Psoas muscle (tissue), 8 donors: ENCODE measurements at regions of chr17 and their contacts with region 1.

Region 1: GRCh38 chr17:79082311-79083190 is 7.9 kb downstream of the ENGASE start:
- DNase-seq: peak; percentile 35 to 76
- ATAC-seq: peak in 3 of 4 donors; percentile 56 to 65 (median 57)
- H3K4me3 ChIP-seq: no peak overlapping the region
- H3K27ac ChIP-seq: no peak overlapping the region
- H3K4me1 ChIP-seq: peaks cover 21% of the 10 kb centered on the region
- H3K27me3 ChIP-seq: no peaks in the 10 kb centered on the region
- CTCF ChIP-seq: peak; percentile 74

Region 2: DNA sequence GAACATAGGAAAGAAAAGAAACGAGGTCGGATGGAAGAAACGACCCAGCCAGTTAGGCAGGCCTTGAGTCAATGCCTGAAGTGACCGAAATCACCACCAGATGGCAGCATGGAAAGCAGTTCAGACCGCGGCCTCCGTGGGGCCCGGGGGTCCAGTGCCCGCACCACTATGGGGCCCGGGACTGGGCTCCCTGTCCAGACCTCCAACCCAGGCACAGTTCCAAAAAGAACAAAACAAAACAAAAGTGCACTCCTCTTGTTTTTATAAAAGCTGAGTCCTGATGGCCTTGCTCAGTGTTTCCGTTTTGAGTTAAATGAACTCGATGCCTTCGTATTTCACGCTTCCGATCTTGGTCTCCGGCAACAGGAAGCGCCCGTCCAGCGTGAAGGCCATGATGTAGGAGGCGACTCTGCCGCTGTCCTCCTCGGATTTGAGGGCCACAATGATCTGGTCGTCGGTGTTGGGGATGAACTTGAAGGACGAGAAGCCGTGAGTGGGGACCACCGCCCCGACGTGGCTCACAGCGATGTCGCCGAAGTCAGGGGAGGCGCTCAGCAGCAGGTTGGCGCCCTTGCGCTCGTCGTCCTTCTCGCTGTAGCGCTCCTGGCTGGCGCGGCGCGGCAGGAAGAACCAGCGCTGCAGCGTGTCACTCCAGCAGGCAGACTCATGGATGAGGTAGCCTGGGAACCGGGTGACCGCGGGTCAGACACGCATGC is 89.2 kb before region 1 on chr17:
- intact Hi-C with region 1: no loop called
- DNase-seq: no peak
- ATAC-seq: peak; percentile 39 to 67 (median 52)
- H3K4me3 ChIP-seq: no peak overlapping the region
- H3K27ac ChIP-seq: no peak overlapping the region
- H3K4me1 ChIP-seq: peaks cover 15% of the 10 kb centered on the region
- H3K27me3 ChIP-seq: no peaks in the 10 kb centered on the region
- CTCF ChIP-seq: peak; percentile 71

Region 3: DNA sequence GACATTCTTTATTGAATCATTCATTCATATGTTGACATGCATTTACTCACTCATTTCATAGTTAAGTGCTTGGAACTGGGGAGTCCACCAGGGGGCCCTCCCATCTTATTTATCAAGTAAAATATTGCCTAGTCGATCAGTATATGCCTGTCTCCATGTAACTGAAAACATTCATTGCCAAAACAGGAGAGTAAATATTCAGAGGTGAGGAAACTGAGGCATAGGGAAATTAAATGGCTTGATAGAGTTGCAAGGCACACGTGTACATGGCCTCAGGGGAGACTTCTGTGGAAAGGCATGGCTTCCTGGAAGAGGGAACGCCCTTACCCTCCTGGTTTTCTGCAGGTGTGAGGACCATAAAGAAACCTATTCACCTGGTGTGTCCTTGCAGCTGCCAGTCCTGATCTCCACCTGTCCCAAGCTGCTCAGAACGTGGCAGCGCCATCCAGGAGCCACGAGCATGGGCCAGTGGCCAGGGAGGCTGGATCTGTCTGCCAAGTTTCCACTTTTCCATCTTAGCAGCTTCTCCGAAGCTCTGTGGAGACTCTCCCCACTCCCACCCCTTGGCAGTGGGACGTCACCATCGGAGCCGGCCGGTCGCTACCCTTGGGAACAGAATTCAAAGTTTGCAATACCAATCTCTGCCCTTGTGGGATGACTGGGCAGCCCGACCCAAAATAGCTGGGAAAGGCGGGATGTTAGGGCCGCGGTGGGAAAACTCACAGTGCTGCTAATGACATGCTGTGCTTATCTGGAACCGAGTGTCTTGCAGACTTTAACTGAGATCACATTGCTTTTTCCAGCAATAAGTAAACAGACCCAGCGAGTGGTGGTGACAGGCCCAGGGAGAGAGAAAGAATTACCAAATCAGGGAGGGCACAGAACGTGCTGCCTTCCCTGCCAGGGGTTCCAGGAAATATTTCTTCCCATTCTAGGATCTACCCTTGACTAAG is 62.6 kb before region 1 on chr17:
- intact Hi-C with region 1: loop called in 1 of 2 experiments (anchors 2 kb)
- DNase-seq: peak; percentile 72
- ATAC-seq: peak; percentile 47 to 76 (median 56)
- H3K4me3 ChIP-seq: no peak overlapping the region
- H3K27ac ChIP-seq: no peak overlapping the region
- H3K4me1 ChIP-seq: peaks cover 16% of the 10 kb centered on the region
- H3K27me3 ChIP-seq: peaks cover 0 to 10% (median 0%) of the 10 kb centered on the region in 3 donors
- CTCF ChIP-seq: peak; percentile 64

Region 4: DNA sequence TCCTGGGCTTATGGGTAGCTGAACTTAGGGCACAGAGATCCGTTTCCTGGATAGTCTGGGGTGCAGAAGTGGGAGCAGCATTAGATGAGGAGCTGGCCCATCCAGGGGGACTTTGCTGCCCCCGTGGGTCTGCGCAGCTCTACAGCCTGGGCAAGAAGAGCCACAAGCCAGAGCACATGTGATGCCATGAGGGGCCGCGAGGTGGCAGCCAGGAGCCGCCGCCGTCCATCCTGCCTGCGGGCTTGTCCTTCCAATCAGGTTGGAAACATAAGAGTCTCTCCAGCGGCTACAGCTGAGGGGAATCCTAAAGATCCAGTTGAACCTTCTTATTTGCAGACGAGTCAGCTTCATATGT is 36.7 kb before region 1 on chr17:
- intact Hi-C with region 1: loop called in 1 of 2 experiments (anchors 5 kb)
- DNase-seq: peak; percentile 76 to 87
- ATAC-seq: peak; percentile 79 to 91 (median 84)
- H3K4me3 ChIP-seq: no peak overlapping the region
- H3K27ac ChIP-seq: no peak overlapping the region
- H3K4me1 ChIP-seq: peaks cover 5% of the 10 kb centered on the region
- H3K27me3 ChIP-seq: peaks cover 0 to 22% (median 5%) of the 10 kb centered on the region in 3 donors
- CTCF ChIP-seq: peak; percentile 96

Region 5: GRCh38 chr17:79065105-79065670 is 17.4 kb before region 1 on chr17:
- intact Hi-C with region 1: loop called (anchors 1 to 2 kb)
- DNase-seq: no peak
- ATAC-seq: peak; percentile 60 to 86 (median 74)
- H3K4me3 ChIP-seq: no peak overlapping the region
- H3K27ac ChIP-seq: no peak overlapping the region
- H3K4me1 ChIP-seq: no peaks in the 10 kb centered on the region
- H3K27me3 ChIP-seq: no peaks in the 10 kb centered on the region
- CTCF ChIP-seq: peak; percentile 73

Region 6: GRCh38 chr17:79223953-79224352 is 141.4 kb after region 1 on chr17:
- intact Hi-C with region 1: no loop called
- DNase-seq: no peak
- ATAC-seq: no peak
- H3K4me3 ChIP-seq: no peak overlapping the region
- H3K27ac ChIP-seq: no peak overlapping the region
- H3K4me1 ChIP-seq: no peaks in the 10 kb centered on the region
- H3K27me3 ChIP-seq: peaks cover 4 to 89% (median 28%) of the 10 kb centered on the region in 3 donors
- CTCF ChIP-seq: no peak

Region 7: DNA sequence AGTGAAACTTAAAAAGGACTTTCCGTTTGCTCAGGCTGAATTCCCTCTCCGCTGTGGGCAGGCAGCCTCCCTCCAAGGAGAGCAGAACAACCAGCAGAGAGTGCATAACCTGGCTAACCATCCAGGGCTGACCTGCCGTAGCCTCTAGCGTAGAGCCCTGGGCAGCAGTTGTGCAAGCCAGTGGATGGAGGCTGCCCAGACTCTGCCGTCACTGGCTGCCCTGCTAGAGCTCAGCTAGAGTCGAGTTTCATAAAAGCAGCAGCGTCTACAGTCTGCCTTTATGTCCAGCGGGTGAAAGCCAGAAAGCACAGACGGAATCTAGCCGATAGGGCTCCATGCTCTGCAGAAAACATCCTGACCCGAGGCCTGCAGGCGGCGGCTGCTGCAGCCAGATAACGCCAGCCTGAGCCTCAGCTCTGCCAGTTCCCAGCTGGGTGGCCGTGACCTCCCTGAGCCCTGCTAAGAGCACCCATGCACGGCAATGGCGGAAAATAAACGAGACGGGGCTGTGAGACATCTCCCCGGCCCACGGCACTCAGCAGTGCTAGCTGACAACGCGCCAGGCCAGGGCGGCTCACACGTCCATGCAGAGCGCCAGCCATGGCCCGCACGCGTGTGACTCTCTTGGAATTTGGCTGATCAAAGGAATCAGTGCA is 223.3 kb after region 1 on chr17:
- intact Hi-C with region 1: loop called in 1 of 2 experiments (anchors 5 kb)
- DNase-seq: peak; percentile 66 to 88
- ATAC-seq: peak; percentile 91 to 94 (median 93)
- H3K4me3 ChIP-seq: peak overlapping the region; percentile 31
- H3K27ac ChIP-seq: peak overlapping the region; percentile 86
- H3K4me1 ChIP-seq: peaks cover 33% of the 10 kb centered on the region
- H3K27me3 ChIP-seq: peaks cover 0 to 6% (median 1%) of the 10 kb centered on the region in 3 donors
- CTCF ChIP-seq: peak; percentile 16